Left ventricle myocardium inferior (tissue), 1 donor: ENCODE measurements at regions of chr5 and their contacts with region 1.

Region 1: DNA sequence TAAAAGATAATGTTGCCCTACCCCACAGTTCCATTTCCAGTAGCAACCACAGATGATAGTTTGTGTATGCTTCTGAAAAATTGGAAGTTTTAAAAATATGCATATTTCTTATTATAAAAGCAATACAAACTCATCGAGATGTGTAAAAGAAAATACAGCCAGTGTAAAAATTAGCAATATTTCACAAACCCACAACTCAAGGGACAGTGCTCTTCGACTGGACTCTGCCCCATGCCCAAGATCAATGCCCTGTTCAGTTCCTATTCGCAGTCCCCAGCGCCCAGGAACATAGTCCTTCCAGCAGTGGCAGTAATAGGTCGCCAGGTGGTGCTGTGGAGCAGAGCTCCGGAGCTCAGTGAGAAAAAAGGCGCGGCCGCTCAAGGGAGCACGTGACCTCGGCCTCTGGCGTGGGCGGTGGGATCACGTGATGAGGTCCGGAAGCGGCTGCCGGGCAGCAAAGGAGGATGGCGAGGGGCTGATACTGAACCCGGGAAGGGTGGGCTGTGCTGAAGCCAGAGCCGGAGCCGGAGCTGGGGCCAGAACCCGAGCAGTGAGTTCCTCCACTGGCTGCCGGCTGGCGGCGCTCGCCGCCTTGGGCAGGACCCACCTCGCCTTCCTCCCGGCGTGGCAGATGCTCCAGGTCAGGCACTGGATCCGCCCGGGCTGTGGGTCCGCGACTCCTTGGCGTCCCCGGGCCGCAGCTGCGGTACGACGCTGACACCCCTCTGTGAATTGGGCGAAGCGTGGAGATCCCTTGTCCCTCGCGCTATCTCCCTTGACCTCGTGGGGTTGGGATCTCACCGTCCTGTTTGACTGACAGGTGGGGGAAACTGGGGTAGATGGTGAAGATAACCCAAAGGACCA is at the start of gene SLC36A1:
- DNase-seq: peak; percentile 94
- H3K4me3 ChIP-seq: peak within 1 kb of the TSS; percentile 81
- H3K27ac ChIP-seq: peak within 1 kb of the TSS; percentile 62
- H3K4me1 ChIP-seq: peaks cover 18% of the 10 kb centered on the region
- H3K27me3 ChIP-seq: peaks cover 21% of the 10 kb centered on the region
- CTCF ChIP-seq: peak; percentile 98
- total RNA-seq, gene SLC36A1: 3.1 TPM

Region 2: GRCh38 chr5:151499501-151500035 is 52.2 kb after region 1 on chr5:
- intact Hi-C with region 1: loop called (anchors 5 kb)
- DNase-seq: no peak
- H3K4me3 ChIP-seq: no peak overlapping the region
- H3K27ac ChIP-seq: no peak overlapping the region
- H3K4me1 ChIP-seq: no peaks in the 10 kb centered on the region
- H3K27me3 ChIP-seq: no peaks in the 10 kb centered on the region
- CTCF ChIP-seq: no peak

Region 3: DNA sequence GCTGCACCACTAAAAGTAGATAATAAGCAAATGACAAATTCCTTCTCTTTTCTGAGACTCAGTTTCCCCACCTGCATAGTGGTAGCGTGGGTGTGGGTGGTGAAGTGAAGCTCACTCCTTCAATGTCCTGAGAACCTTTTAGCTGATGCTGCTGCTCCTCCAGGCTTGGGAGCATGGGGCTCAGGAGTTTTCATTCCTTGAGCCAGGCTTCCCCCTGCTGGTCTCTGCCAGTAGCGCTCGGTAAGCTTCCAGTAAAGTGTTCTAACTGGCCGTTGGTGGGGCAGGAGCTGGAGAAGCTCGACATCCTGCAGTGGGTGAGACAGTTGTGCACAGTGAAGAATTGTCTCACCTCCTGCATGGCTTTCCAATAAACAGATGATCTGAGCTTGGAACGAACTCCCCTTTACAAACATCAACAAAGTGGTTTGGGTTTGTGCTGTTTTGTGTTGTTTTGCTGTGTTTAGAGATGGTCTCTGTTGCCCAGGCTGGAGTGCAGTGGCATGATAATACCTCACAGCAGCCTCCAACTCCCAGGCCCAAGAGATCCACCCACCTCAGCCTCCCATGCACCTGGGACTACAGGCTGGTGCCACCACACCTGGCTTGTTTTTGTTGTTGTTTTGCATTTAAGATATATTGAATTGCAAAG is 204.7 kb after region 1 on chr5:
- intact Hi-C with region 1: loop called (anchors 5 kb)
- DNase-seq: peak; percentile 79
- H3K4me3 ChIP-seq: no peak overlapping the region
- H3K27ac ChIP-seq: no peak overlapping the region
- H3K4me1 ChIP-seq: no peaks in the 10 kb centered on the region
- H3K27me3 ChIP-seq: no peaks in the 10 kb centered on the region
- CTCF ChIP-seq: peak; percentile 90

Region 4: DNA sequence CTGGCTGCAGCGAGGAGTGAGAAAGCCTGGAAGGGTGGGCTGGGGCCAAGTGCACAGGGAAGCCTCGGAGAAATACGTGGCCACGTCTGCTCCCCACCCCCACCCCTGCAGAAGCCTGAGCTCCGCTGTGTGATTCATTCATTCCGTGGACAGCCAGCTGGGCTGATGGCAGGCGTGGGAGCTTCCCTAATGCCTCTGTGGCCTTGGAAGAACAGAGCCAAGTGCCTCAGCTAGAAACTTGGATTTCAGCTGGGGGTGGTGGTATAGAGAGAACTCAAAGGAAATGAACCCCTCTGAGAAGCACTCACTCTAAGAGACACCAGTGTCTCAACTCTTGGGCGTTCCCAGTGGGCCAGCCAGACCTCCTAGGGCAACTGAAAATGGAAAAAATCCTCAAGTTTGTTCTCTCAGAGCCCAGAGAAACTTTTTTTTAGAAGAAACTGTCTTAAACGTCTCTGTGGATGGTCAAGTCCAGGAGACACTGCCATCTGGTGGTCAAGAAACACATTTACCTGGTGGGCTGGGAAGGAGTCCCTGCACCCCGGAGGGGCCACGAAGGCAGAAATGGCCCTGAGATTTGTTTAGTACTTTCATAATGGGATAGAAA is 293.0 kb after region 1 on chr5:
- intact Hi-C with region 1: loop called (anchors 10 kb)
- DNase-seq: peak; percentile 71
- H3K4me3 ChIP-seq: peak overlapping the region; percentile 26
- H3K27ac ChIP-seq: peak overlapping the region; percentile 72
- H3K4me1 ChIP-seq: peaks cover 35% of the 10 kb centered on the region
- H3K27me3 ChIP-seq: no peaks in the 10 kb centered on the region
- CTCF ChIP-seq: peak; percentile 95

Region 5: DNA sequence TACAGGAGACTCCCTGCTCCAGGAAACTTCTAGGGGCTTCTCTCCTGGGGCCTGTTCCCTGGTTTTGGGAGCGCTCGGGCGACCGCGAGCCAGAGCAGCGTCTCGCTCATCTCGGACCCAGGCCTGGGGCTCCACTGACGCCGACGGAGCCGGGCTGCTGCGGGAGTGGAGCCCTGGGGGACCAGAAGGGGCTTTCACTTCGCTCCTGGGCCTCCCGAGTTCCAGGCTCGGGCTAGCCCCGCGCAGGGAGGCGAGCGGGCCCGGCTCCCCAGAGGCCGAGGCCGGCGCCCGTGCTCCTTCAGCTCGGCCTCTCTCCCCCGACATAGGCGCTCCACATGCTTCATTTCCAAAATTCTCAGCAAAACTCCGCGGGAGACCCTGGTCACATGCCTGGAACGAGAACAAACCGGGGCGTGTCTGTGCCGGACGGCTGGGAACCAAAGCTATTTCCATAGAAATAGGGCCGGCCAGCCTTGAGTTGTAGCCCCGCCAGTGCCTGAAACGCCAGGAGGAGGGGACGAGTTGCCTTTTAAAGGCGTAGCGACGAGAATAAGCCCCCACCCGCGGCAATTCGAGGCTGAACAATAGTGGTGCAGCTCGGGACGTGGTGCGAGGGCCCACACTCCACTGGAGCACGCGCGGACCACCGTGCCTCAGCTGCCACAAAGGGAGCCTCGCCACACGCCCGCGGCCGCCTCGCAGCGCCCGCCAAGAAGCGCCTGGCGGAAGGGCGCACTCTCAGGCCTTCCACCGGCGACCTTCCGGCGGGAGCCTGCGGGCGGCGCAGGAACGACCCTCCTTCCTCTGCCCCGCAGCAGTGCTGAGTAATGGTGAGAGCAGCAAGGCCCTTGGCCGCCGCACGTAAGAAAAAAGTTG is 323.2 kb after region 1 on chr5:
- intact Hi-C with region 1: no loop called
- DNase-seq: peak; percentile 82
- H3K4me3 ChIP-seq: peak overlapping the region; percentile 72
- H3K27ac ChIP-seq: peak overlapping the region; percentile 99
- H3K4me1 ChIP-seq: peaks cover 50% of the 10 kb centered on the region
- H3K27me3 ChIP-seq: no peaks in the 10 kb centered on the region
- CTCF ChIP-seq: no peak